ENCODE measurements at regions of chr9 and their contacts with region 1.

Region 1: GRCh38 chr9:14322211-14323082 is 8.5 kb upstream of the NFIB start:
- DNase-seq: peak; percentile 86 to 92
- ATAC-seq: peak; percentile 67 to 76
- H3K4me3 ChIP-seq: peak overlapping the region; percentile 69 to 79 (median 77)
- H3K27ac ChIP-seq: peak overlapping the region; percentile 92 to 99 (median 98)
- H3K4me1 ChIP-seq: peaks cover 70 to 84% of the 10 kb centered on the region in 2 donors
- H3K27me3 ChIP-seq: no peaks in the 10 kb centered on the region
- CTCF ChIP-seq: peak; percentile 59 to 77 (median 66)
- POLR2A ChIP-seq: peak; percentile 62 to 78

Region 2: GRCh38 chr9:14030375-14031059 is 291.9 kb before region 1 on chr9:
- in situ Hi-C with region 1: loop called in 1 of 4 experiments (anchors 10 kb)
- intact Hi-C with region 1: loop called (anchors 2 kb)
- DNase-seq: peak; percentile 40 to 43
- ATAC-seq: peak; percentile 66 to 68
- H3K4me3 ChIP-seq: peak overlapping the region; percentile 20 to 46 (median 38)
- H3K27ac ChIP-seq: peak overlapping the region; percentile 83 to 91 (median 85)
- H3K4me1 ChIP-seq: peaks cover 43 to 66% of the 10 kb centered on the region in 2 donors
- H3K27me3 ChIP-seq: no peaks in the 10 kb centered on the region
- CTCF ChIP-seq: no peak
- POLR2A ChIP-seq: no peak

Region 3: GRCh38 chr9:14212077-14212476 is 110.4 kb before region 1 on chr9:
- in situ Hi-C with region 1: no loop called
- intact Hi-C with region 1: no loop called
- DNase-seq: no peak
- ATAC-seq: no peak
- H3K4me3 ChIP-seq: no peak overlapping the region
- H3K27ac ChIP-seq: peak overlapping the region in 1 of 4 donors; percentile 4
- H3K4me1 ChIP-seq: peaks cover 56 to 69% of the 10 kb centered on the region in 2 donors
- H3K27me3 ChIP-seq: no peaks in the 10 kb centered on the region
- CTCF ChIP-seq: no peak
- POLR2A ChIP-seq: no peak

Region 4: GRCh38 chr9:14271093-14271673 is 51.3 kb before region 1 on chr9:
- in situ Hi-C with region 1: no loop called
- intact Hi-C with region 1: no loop called
- DNase-seq: peak; percentile 30 to 34
- ATAC-seq: peak in 1 of 2 donors; percentile 49
- H3K4me3 ChIP-seq: peak overlapping the region in 1 of 4 donors; percentile 6
- H3K27ac ChIP-seq: peak overlapping the region; percentile 11 to 64 (median 63)
- H3K4me1 ChIP-seq: peaks cover 72 to 78% of the 10 kb centered on the region in 2 donors
- H3K27me3 ChIP-seq: no peaks in the 10 kb centered on the region
- CTCF ChIP-seq: no peak
- POLR2A ChIP-seq: no peak

Region 5: DNA sequence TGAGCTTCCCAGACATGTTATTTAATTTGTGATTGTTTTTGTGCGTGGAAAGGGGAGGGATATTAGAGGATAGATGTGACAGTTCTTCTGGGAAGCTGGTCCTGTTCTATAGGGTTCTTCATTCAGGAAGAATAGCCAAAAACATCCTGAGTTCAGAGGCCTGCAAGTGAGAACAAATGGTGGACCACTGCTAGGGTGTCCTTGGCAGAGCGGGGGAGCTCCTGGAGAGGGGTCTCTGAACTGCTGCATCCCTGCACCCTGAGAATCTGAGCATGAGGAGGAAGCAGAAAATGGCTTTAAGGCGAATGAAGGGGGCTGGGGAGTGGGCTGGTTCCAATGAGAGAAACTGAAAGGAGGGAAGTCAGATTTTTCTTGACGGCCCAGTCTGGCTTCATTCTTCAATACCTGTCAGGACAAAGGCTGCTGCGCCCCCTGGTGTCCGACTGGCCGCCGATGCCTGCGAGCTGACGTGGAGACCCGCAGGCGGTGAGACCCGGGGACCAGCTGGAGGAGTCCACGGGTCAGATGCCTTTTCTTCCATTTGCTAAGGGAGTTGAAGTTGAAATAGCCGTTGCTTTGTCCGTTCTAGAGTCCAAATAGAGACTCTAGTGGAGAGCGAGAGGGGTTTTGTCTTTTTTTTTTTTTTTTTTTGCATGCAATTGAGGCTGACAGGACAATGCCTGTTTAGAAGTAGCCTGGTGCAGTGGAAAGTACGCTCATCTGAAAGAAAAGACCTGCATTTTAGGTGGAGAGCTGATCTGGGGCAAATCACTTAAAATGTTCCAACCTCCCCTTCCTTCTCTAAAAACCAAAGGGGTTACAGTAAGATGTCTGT is 31.0 kb after region 1 on chr9:
- in situ Hi-C with region 1: no loop called
- intact Hi-C with region 1: loop called (anchors 2 kb)
- DNase-seq: peak; percentile 86 to 89
- ATAC-seq: peak; percentile 66 to 69
- H3K4me3 ChIP-seq: peak overlapping the region; percentile 15 to 40 (median 36)
- H3K27ac ChIP-seq: peak overlapping the region; percentile 84 to 90 (median 87)
- H3K4me1 ChIP-seq: peaks cover 19 to 24% of the 10 kb centered on the region in 2 donors
- H3K27me3 ChIP-seq: no peaks in the 10 kb centered on the region
- CTCF ChIP-seq: peak; percentile 87 to 95 (median 92)
- POLR2A ChIP-seq: no peak

Region 6: DNA sequence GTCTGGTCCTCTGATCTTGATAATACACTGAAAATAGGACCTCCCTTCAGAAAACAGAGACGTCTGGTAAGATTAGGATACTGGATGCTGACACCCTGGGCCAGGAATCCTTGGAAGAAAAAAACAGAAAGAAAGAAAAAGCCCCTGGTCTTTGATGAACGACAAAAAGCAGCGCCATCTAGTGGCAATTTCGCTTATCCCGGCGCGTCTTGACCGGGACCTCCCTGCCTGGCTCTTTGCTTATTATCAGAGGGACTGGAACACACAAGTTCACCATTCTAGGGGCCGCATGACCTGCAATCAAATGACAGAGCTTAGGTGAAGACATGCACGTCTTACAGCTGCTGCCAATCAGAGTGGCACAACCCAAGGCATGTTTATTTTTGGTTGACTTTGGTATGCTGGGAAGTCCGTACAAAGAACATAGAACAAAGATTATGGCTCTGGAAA is 106.4 kb after region 1 on chr9:
- in situ Hi-C with region 1: loop called in 1 of 4 experiments (anchors 25 kb)
- intact Hi-C with region 1: no loop called
- DNase-seq: peak; percentile 19 to 44
- ATAC-seq: peak; percentile 42 to 82
- H3K4me3 ChIP-seq: no peak overlapping the region
- H3K27ac ChIP-seq: no peak overlapping the region
- H3K4me1 ChIP-seq: peaks cover 5 to 10% of the 10 kb centered on the region in 2 donors
- H3K27me3 ChIP-seq: no peaks in the 10 kb centered on the region
- CTCF ChIP-seq: peak; percentile 45 to 85 (median 59)
- POLR2A ChIP-seq: no peak

Region 7: DNA sequence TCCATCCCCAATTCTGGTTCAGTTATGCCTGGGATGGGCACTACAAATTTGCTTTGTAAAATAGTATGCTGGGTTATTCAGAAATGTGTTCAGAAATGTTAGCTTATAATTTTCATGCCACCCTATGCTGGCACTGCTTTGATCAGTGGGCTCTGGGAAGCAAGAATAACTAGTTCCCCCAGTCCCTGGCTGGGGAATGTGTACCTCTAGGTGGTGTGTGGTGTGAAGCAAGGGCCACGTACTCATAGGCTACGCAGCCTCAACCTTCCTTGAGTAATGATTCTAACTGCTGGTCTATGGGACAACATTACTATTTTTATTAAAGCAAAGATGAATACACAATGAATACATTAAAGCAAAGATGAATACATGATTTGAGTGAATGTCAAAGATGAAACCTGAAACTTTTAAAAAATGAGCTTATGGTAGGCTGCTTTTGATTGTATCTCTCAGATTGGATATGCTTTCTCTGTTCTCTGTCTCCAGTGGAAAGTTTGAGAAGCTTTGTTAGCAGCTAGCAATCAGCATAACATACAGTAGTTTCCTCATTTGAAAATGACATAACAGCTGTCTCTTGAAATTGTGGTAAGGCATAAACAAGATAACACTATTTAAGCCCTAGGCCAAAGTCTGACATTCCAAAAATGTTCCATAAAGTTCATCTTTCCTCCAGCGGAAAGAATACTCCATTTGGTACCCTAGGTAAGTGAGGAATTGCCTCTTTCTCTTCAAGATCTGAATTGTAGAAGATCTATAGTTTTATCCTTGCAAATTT is 166.2 kb after region 1 on chr9:
- in situ Hi-C with region 1: no loop called
- intact Hi-C with region 1: no loop called
- DNase-seq: no peak
- ATAC-seq: no peak
- H3K4me3 ChIP-seq: no peak overlapping the region
- H3K27ac ChIP-seq: no peak overlapping the region
- H3K4me1 ChIP-seq: no peaks in the 10 kb centered on the region
- H3K27me3 ChIP-seq: no peaks in the 10 kb centered on the region
- CTCF ChIP-seq: no peak
- POLR2A ChIP-seq: no peak